PC-3 (cell line): ENCODE measurements at regions of chrX and their contacts with region 1.

Region 1: DNA sequence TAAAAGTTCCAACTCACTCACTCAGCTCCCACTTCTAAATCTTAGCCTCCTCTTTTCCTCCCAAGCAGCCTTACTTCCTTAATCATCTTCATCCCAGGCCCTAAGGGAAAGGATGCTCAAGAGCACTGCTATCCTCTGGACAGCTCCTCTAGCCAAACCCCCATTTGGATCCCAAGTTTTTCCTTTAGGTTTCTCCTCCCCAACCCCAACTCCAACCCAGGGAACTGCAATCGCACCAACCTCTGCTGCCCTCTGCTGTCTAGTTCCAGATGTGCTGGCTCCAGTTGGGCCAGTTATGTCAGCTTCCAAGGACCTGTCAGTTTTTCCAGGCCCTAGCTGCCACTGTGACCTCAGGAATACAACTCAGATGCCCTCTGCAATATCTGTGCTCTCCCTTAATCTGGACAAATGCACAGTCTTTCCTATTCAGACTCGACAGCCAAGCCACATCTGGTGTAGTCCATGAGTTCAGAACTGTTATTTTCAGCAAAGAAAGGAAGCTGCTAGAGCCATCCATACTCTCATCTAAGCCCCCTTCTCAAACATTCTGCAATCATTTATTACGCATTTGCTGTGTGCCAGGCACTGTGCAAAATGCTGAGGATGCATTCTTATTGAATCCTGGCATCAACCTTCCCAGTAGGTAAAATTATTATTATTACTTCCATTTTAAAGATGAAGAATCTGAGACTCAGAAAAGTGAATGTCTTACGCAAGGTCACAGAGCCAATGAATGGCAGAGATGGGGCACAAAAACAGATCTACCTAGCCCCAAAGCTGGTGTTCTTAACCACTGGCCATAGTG is 12.3 kb upstream of the XPNPEP2 start:
- DNase-seq: peak; percentile 82
- ATAC-seq: peak; percentile 88
- H3K4me3 ChIP-seq: no peak overlapping the region
- H3K27ac ChIP-seq: no peak overlapping the region
- H3K4me1 ChIP-seq: peaks cover 13% of the 10 kb centered on the region; the same call in 1 of the 2 replicates
- H3K27me3 ChIP-seq: no peaks in the 10 kb centered on the region
- CTCF ChIP-seq: peak; percentile 86

Region 2: DNA sequence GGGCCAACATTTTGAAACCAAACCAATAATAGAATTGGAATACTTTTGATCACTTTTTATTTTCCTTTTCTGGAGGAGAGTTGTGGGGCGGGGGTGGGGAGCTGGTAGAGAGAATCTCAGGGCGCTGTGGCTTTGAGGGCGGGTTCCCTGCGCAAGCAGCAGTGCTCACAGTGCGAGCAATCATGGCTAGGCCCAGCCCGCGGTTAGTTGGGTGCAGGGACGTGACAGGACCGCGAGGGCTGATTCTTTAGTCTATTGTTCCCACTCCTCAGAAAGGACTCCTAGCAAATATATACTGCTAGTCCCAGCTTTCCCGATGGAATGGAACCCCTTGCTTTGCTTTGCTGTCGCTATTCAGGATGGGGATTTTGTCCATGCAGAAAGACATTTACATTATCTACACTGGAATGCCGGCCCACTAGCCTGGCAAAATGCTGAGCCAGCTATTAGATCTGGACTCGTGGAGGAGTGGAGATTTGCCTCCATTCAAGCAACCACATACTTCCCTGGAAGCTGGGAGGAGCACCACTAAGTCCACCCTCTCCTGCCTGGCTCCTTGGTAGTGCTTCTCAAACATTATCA is 47.8 kb before region 1 on chrX:
- CTCF ChIA-PET with region 1: no interaction called
- POLR2A ChIA-PET with region 1: no interaction called
- intact Hi-C with region 1: loop called (anchors 1 kb)
- DNase-seq: peak; percentile 7
- ATAC-seq: peak; percentile 45
- H3K4me3 ChIP-seq: peak overlapping the region; percentile 73
- H3K27ac ChIP-seq: peak overlapping the region; percentile 22
- H3K4me1 ChIP-seq: peaks cover 30% of the 10 kb centered on the region
- H3K27me3 ChIP-seq: no peaks in the 10 kb centered on the region
- CTCF ChIP-seq: no peak; the same call in 1 of the 2 replicates

Region 3: DNA sequence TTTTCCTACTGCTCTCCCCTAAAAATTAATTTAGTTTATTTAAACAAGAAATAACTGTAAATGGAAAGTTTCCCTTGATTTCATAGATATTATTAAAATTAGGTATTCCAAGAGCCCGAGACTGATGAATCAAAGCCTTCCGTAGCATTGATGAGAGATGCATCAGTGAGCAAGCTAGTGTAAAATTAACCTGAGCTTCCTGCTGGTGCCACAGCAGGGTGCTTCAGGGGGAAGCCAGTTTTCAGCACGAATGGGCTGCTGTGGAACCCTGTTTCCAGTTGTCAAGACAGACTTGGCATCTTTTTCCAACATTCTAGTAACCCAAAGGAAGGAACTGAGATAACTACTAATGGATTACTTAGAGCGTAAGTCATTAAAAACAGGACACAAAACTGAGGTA is 897.0 kb after region 1 on chrX:
- CTCF ChIA-PET with region 1: no interaction called
- POLR2A ChIA-PET with region 1: no interaction called
- intact Hi-C with region 1: no loop called
- DNase-seq: no peak
- ATAC-seq: no peak
- H3K4me3 ChIP-seq: no peak overlapping the region
- H3K27ac ChIP-seq: no peak overlapping the region
- H3K4me1 ChIP-seq: no peaks in the 10 kb centered on the region
- H3K27me3 ChIP-seq: no peaks in the 10 kb centered on the region
- CTCF ChIP-seq: no peak